Heart left ventricle (tissue), 16 donors: ENCODE measurements at regions of chr3 and their contacts with region 1.

Region 1: DNA sequence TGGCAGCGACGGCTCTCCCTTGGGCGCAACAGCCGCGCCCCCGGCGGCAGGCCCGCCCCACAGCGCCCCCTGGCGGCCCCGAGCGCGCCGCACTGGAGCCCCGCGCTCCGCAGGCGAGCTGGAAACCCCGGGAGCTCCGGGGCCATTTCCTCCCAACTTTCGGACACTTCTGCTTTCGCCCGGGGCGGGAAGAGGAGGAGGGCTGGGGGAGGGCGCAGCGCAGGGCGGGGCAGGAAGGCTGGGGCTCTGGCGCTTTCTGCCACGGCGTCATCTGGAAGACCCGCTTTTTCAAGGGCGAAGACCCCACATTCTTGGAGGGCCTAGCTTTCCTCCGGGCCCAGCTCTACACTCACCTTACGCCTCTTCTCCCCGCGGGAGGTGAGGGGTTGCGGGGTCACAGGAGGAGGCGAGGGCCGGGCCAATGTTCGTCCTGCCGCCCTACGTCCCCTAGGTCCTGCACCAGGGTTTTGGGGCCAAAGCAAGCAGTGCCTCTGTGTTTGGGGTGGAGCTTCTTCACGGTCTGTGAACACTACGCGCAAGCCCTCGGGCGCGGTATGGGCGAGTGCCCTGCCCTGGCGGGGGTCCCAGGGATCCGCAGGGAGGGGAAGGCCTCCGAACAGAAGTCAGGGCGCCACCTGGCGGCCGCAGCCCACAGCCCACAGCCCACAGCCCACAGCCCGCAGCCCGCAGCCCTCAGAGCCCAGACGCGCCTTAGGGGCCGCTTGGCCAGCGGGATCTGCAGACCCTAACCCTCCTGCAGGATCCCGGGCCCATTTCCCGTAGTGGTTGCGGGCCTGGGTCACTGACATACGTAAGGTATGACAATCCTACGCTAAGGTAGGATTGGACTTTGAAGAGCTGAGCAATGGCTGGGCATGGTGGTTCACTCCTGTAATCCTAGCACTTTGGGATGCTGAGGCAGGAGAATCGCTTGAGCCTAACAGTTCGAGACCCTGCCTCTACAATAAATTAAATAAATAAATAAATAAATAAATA is 31.1 kb downstream of the FOXL2 start:
- DNase-seq: peak; percentile 91 to 97 (median 94)
- ATAC-seq: peak; percentile 97 to 98 (median 98)
- H3K4me3 ChIP-seq: peak overlapping the region; percentile 57 to 90 (median 84)
- H3K27ac ChIP-seq: peak overlapping the region; percentile 82 to 98 (median 96)
- H3K4me1 ChIP-seq: peaks cover 0 to 16% (median 6%) of the 10 kb centered on the region in 12 donors
- H3K27me3 ChIP-seq: no peaks in the 10 kb centered on the region
- CTCF ChIP-seq: peak; percentile 78 to 97 (median 87)
- POLR2A ChIP-seq: peak in 1 of 2 donors; percentile 29

Region 2: DNA sequence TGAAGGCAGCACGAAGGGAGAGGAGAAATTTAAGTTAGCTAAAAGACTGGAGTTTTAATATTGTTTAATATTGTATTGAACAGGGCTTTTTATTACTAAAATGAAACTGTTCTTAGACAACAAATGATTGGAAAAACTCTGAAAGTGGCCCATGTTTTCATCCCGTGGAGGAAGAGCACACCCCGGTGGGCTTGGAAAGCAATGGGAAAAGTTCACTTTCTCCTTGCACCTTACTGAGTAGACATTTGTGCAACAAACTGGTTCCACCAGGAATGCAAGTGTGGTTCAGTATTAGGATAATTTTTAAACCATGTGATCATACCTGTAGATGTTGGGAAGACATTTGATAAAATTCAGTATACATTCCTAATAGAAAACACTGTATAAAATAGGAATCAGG is 489.6 kb before region 1 on chr3:
- intact Hi-C with region 1: loop called in 1 of 10 experiments (anchors 10 kb)
- DNase-seq: no peak
- ATAC-seq: no peak
- H3K4me3 ChIP-seq: no peak overlapping the region
- H3K27ac ChIP-seq: no peak overlapping the region
- H3K4me1 ChIP-seq: no peaks in the 10 kb centered on the region
- H3K27me3 ChIP-seq: peaks cover 0 to under 1% (median 0%) of the 10 kb centered on the region in 9 donors
- CTCF ChIP-seq: peak; percentile 16 to 62 (median 48)
- POLR2A ChIP-seq: no peak

Region 3: GRCh38 chr3:138493804-138494606 is 421.8 kb before region 1 on chr3:
- intact Hi-C with region 1: no loop called
- DNase-seq: no peak
- ATAC-seq: peak; percentile 83 to 90 (median 87)
- H3K4me3 ChIP-seq: no peak overlapping the region
- H3K27ac ChIP-seq: peak overlapping the region in 10 of 12 donors; percentile 2 to 85 (median 63)
- H3K4me1 ChIP-seq: peaks cover 0 to 20% (median 8%) of the 10 kb centered on the region in 12 donors
- H3K27me3 ChIP-seq: no peaks in the 10 kb centered on the region
- CTCF ChIP-seq: no peak
- POLR2A ChIP-seq: no peak

Region 4: GRCh38 chr3:138681463-138682220 is 234.2 kb before region 1 on chr3:
- intact Hi-C with region 1: no loop called
- DNase-seq: no peak
- ATAC-seq: no peak
- H3K4me3 ChIP-seq: no peak overlapping the region
- H3K27ac ChIP-seq: no peak overlapping the region
- H3K4me1 ChIP-seq: no peaks in the 10 kb centered on the region
- H3K27me3 ChIP-seq: no peaks in the 10 kb centered on the region
- CTCF ChIP-seq: no peak
- POLR2A ChIP-seq: no peak

Region 5: DNA sequence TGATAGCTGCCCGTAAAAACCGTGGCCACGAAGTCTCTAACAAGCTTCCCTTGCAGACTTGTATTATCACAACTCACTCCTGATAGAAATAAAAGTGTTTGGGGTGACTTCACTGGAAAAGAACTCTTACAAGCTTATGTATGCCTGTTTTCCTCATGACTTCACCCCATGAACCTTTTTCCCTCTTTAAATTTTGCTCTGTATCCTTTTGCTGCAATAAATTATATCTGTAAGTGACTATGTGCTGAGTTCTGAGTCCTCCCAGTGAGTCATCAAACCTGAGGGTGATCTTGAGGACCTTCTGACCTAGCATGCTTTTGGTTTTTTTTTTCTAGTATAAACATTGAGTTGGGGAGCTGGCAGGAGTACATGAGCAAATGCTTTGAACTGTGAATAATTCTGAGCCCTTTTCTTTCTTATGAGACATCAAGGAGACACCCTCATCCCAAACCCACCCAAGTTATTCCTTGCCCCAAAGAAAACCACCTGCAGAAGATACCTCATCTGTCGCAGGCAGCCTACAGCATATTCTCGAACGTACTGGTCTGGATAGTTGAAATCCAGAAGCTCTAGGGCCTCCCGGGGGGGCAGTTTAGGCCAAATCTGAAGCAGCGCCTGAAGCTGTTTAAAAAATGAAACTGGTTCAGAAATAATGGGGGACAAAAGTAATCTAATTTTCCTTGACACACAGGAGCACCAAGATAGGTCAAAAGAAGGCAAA is 221.4 kb before region 1 on chr3:
- intact Hi-C with region 1: loop called in 8 of 10 experiments (anchors 1 to 5 kb)
- DNase-seq: no peak
- ATAC-seq: no peak
- H3K4me3 ChIP-seq: no peak overlapping the region
- H3K27ac ChIP-seq: no peak overlapping the region
- H3K4me1 ChIP-seq: peaks cover 0 to 6% (median 0%) of the 10 kb centered on the region in 12 donors
- H3K27me3 ChIP-seq: no peaks in the 10 kb centered on the region
- CTCF ChIP-seq: no peak
- POLR2A ChIP-seq: no peak

Region 6: GRCh38 chr3:138834359-138835212 is 81.2 kb before region 1 on chr3 and contains the start of gene PIK3CB:
- intact Hi-C with region 1: loop called (anchors 1 to 10 kb)
- DNase-seq: peak; percentile 91 to 96 (median 93)
- ATAC-seq: peak; percentile 95 to 99 (median 98)
- H3K4me3 ChIP-seq: peak within 1 kb of the TSS; percentile 86 to 100 (median 96)
- H3K27ac ChIP-seq: peak within 1 kb of the TSS; percentile 77 to 99 (median 96)
- H3K4me1 ChIP-seq: peaks cover 0 to 33% (median 10%) of the 10 kb centered on the region in 12 donors
- H3K27me3 ChIP-seq: no peaks in the 10 kb centered on the region
- CTCF ChIP-seq: peak in 11 of 12 donors; percentile 7 to 50 (median 28)
- POLR2A ChIP-seq: peak in 1 of 2 donors; percentile 83
- total RNA-seq, gene PIK3CB: 23.4 to 38.1 (median 29.4) TPM

Region 7: DNA sequence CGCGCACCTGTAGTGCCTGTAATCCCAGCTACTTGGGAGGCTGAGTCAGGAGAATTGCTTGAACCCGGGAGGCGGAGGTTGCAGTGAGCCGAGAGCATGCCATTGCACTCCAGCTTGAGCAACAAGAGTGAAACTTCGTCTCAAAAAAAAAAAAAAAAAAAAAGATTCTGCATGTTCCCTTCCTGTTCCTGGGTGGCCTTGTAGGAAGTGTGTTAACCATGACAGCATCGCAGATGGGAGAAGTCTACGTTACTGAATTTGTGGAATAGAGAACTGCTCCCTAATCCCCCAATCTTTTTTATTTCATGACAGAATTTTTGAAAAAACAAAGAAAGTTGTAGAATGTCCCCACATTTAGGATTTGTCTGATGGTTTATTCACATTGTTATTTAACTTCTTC is 14.2 kb before region 1 on chr3:
- intact Hi-C with region 1: no loop called
- DNase-seq: no peak
- ATAC-seq: no peak
- H3K4me3 ChIP-seq: no peak overlapping the region
- H3K27ac ChIP-seq: peak overlapping the region in 1 of 12 donors; percentile 80
- H3K4me1 ChIP-seq: peaks cover 7 to 26% (median 19%) of the 10 kb centered on the region in 12 donors
- H3K27me3 ChIP-seq: no peaks in the 10 kb centered on the region
- CTCF ChIP-seq: no peak
- POLR2A ChIP-seq: no peak